ENCODE measurements at regions of chr20 and their contacts with region 1.

Region 1: GRCh38 chr20:41939659-41940058 is 321.5 kb upstream of the CHD6 start:
- DNase-seq: no peak
- H3K4me3 ChIP-seq: no peak overlapping the region
- H3K27ac ChIP-seq: no peak overlapping the region
- H3K4me1 ChIP-seq: no peaks in the 10 kb centered on the region
- H3K27me3 ChIP-seq: no peaks in the 10 kb centered on the region
- CTCF ChIP-seq: no peak

Region 2: GRCh38 chr20:41889126-41889870 is 50.4 kb before region 1 on chr20:
- CTCF ChIA-PET with region 1: no interaction called
- POLR2A ChIA-PET with region 1: no interaction called
- intact Hi-C with region 1: loop called (anchors 2 kb)
- DNase-seq: no peak
- H3K4me3 ChIP-seq: no peak overlapping the region
- H3K27ac ChIP-seq: no peak overlapping the region
- H3K4me1 ChIP-seq: no peaks in the 10 kb centered on the region
- H3K27me3 ChIP-seq: peaks cover 51% of the 10 kb centered on the region
- CTCF ChIP-seq: 0 out of 2 replicates have a peak, but pooled peaks have one; percentile 21